Activated CD8-positive, alpha-beta T cell treated with anti-CD3 and anti-CD28 coated beads for 36 hours (primary cell): ENCODE measurements at regions of chr6 and their contacts with region 1.

Region 1: DNA sequence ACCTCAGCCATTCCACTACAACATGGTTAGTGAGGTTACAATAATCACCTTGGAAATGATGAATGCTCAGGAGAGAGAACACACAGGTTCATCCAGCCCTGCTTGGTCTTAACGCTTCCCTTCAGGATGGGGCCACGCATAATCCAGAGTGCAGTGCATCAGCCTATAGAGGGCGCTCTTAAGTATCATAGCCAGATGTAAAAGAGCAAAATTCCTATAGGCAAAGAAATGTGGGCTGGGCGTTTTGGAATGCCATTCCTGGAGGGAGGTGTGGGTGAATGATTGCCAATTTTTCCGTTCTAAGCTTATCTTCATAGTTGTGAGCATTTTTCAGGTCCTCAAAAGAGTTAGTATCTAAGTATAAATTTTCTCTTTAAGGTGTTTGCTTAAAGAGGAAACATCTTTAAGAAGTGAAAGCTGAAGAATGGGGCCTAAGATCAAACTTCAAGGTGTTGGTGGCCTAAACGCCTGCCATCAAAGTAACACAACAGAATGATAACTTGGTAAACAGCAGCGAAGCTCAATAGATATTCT is 1.8 kb downstream of the RIPOR2 start:
- DNase-seq: peak; percentile 61
- ATAC-seq: no peak
- H3K4me3 Mint-ChIP-seq: peak overlapping the region; percentile 92
- H3K27ac Mint-ChIP-seq: peak overlapping the region; percentile 95
- H3K4me1 Mint-ChIP-seq: peaks cover 73% of the 10 kb centered on the region
- H3K27me3 Mint-ChIP-seq: no peaks in the 10 kb centered on the region
- CTCF ChIP-seq: peak; percentile 97

Region 2: DNA sequence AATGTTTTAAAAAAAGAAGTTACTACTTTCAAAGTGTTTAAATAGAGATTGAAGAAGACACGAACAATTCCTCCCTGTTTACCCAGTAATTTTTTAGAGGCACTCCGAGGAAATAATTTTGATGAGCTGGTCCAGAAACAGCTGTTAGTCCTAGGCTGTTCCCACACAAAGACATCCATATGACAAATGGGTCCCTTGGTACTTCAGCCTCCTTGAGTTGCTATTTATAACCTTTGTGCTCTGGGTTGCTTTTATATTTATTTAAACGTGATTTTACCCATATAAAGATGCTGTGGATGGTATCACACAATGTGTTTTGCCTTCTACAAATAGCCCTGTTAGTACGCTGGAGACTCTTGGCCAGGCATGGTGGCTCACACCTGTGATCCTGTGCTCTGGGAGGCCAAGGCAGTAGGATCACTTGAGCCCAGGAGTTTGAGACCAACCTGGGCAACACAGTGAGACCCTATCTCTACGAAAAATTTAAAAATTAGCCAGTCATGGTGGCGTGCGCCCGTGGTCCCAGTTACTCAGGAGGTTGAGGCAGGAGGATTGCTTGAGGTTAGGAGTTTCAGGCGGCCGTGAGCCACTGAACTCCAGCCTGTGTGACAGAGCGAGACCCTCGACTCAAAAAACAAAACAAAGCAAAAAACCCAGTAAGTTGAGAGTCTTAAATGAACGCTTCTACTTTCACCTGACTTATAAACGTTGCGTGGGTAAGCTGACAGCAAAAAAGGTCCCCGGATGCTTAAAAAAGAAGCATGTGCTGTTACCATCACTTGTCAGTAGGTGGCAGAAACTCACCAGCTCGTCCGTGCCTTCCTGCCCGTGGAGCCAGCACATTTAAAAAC is 78.3 kb before region 1 on chr6:
- CTCF ChIA-PET with region 1: interaction called, 128 read pairs
- POLR2A ChIA-PET with region 1: interaction called, 7 read pairs
- intact Hi-C with region 1: loop called (anchors 2 kb)
- DNase-seq: peak; percentile 83
- ATAC-seq: peak; percentile 68
- H3K4me3 Mint-ChIP-seq: peak overlapping the region; percentile 22
- H3K27ac Mint-ChIP-seq: peak overlapping the region; percentile 87
- H3K4me1 Mint-ChIP-seq: peaks cover 61% of the 10 kb centered on the region
- H3K27me3 Mint-ChIP-seq: no peaks in the 10 kb centered on the region
- CTCF ChIP-seq: peak; percentile 88

Region 3: DNA sequence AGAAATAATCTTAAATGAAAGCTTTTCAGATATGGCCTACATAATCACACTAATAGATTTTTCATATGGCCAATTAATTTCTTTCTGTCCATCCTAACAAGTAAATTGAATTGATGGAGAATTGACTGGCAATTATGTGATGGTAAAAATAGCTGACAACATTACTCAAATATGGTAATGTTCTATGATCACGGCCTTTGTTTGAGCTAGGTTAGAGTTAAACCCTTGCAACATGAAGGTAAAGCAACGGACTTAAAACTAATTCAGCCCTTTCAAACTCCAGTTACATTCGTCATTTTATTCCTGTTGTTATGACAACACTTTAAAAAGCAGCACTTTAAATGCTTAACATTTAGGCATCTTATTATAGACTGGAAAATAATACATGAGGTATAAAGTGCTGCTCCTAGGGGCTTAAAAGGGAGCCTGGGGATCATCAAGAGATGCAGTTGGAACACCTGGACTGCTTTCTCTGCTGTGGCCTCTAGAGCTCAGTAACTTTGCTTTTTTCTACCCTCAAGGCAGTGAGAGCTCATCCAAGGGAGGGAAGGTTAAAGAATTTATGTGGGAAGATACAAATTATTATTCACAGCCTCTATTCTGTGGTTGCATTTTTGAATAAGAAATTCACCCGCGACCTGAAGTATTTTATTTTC is 45.1 kb before region 1 on chr6:
- CTCF ChIA-PET with region 1: interaction called, 53 read pairs
- POLR2A ChIA-PET with region 1: interaction called, 6 read pairs
- intact Hi-C with region 1: no loop called
- DNase-seq: no peak
- ATAC-seq: no peak
- H3K4me3 Mint-ChIP-seq: peak overlapping the region; percentile 18
- H3K27ac Mint-ChIP-seq: peak overlapping the region; percentile 88
- H3K4me1 Mint-ChIP-seq: peaks cover 83% of the 10 kb centered on the region
- H3K27me3 Mint-ChIP-seq: no peaks in the 10 kb centered on the region
- CTCF ChIP-seq: peak; percentile 27

Region 4: DNA sequence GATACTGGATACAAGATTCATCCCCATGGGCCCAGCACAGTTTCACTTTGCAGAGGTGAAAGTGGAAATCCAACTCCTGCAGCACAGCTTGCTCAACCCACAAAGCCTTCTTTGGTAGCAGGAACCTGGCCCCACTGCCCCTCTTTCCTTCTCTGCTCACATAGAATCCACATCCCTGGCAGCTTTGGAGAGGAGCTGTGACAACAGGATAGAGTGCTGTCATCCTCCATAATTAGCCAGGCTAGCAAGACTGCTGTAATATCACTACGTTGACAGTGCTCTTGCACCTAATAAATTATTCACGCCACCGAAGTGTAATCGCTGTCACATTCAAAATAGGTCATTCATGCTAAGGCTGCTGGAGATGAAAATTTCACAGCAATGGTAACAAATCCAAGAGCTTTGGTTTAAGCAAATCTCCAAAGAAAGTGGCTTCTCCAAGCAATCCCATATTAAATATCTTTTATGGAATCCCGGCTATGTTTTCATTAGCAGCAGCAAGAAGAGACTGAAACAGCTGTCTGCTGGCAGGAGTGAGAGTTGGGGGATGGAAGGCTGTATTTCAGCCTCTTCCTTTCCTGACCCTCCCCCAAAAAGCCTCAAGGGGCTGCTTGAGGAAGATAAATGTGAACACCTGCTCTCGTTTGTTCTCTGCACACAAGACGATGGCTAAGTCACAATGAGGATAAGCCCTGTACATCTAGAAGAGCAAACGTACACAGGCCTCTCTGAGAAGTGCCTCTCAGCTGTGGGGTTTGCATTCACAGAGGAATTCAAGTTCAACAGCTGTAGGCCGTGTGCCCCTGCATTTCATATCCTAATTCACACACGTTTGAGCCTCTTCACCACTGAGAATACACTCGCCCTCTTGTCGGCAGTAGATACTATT is 14.7 kb before region 1 on chr6:
- CTCF ChIA-PET with region 1: interaction called, 237 read pairs
- POLR2A ChIA-PET with region 1: interaction called, 191 read pairs
- intact Hi-C with region 1: no loop called
- DNase-seq: peak; percentile 46
- ATAC-seq: peak; percentile 11
- H3K4me3 Mint-ChIP-seq: peak overlapping the region; percentile 69
- H3K27ac Mint-ChIP-seq: peak overlapping the region; percentile 94
- H3K4me1 Mint-ChIP-seq: peaks cover 82% of the 10 kb centered on the region
- H3K27me3 Mint-ChIP-seq: no peaks in the 10 kb centered on the region
- CTCF ChIP-seq: no peak

Region 5: GRCh38 chr6:24974182-24975171 is 40.5 kb after region 1 on chr6:
- CTCF ChIA-PET with region 1: interaction called, 10 read pairs
- POLR2A ChIA-PET with region 1: interaction called, 12 read pairs
- intact Hi-C with region 1: loop called (anchors 5 kb)
- DNase-seq: peak; percentile 70
- ATAC-seq: peak; percentile 90
- H3K4me3 Mint-ChIP-seq: peak overlapping the region; percentile 41
- H3K27ac Mint-ChIP-seq: peak overlapping the region; percentile 92
- H3K4me1 Mint-ChIP-seq: peaks cover 49% of the 10 kb centered on the region
- H3K27me3 Mint-ChIP-seq: no peaks in the 10 kb centered on the region
- CTCF ChIP-seq: no peak

Region 6: DNA sequence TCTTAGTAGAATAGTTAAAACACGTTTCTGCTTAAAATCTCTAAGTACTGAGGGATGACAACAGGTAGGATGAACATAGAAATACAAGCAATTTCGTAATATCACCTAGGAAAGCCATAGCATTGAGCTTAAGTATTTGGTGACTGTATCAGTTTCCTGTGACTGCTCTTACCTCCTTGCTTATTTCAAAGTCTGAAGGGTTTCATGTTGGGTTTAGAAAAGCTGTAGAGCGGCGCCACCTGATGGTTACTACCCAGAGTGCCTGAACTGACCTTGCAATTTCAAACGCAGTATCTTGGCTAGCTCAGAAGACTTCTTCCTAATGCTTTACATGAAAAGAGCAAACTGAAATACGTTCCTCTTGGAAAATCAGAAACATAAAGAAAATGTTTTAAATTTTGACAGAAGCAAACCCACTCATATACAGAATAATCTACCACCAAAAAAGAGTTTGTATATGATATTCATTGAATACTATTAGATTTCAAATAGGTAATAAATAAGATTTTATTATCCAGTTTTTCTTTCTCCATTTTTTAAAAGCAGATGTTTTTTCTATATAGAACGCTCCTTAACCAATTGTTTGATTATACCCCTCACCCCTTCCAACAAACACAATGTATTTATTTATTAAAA is 84.1 kb after region 1 on chr6:
- CTCF ChIA-PET with region 1: interaction called, 86 read pairs
- POLR2A ChIA-PET with region 1: interaction called, 3 read pairs
- intact Hi-C with region 1: no loop called
- DNase-seq: peak; percentile 94
- ATAC-seq: peak; percentile 80
- H3K4me3 Mint-ChIP-seq: peak overlapping the region; percentile 11
- H3K27ac Mint-ChIP-seq: peak overlapping the region; percentile 76
- H3K4me1 Mint-ChIP-seq: peaks cover 51% of the 10 kb centered on the region
- H3K27me3 Mint-ChIP-seq: no peaks in the 10 kb centered on the region
- CTCF ChIP-seq: peak; percentile 84

Region 7: DNA sequence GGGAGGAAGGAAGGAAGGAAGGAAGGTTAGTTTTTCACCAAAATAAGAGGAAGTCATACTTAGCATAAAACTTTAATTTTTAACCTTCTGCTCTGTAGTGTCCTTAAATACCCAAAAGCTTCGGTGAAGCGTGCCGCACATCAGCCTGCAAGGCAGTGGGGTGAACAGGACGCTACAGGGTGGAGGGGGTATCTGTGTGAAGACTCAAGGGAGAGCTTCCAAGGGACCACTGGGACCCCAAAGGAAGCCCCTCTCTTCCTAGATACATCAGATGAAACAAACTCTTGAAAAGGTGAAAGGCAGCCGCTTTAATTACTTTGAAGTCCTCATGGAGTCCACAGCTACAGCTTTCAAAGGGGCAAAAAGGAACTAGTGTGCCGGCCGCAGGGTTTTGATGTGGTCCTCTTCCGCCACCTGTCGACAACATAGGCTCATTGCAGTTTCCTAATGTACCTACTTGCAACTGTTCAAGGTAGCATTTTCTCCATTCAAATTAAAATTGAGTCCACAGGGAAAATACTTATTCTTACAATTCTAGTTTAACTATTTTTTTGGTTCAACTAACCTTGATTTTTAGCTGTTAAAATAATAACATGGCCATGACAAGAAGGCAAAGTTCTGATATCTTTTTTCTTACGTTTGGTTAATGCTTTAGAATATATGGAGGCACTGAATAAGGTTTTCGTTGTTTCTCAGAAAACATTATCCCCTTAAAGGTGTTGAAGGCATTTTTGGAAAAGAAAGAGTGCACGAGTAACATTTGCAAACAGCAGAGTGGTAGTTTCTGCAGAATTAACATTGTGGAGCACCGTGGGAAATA is 136.8 kb after region 1 on chr6:
- CTCF ChIA-PET with region 1: interaction called, 28 read pairs
- POLR2A ChIA-PET with region 1: interaction called, 3 read pairs
- intact Hi-C with region 1: loop called (anchors 10 kb)
- DNase-seq: peak; percentile 92
- ATAC-seq: peak; percentile 99
- H3K4me3 Mint-ChIP-seq: peak overlapping the region; percentile 68
- H3K27ac Mint-ChIP-seq: peak overlapping the region; percentile 94
- H3K4me1 Mint-ChIP-seq: peaks cover 6% of the 10 kb centered on the region
- H3K27me3 Mint-ChIP-seq: no peaks in the 10 kb centered on the region
- CTCF ChIP-seq: peak; percentile 87